MCF 10A (cell line): ENCODE measurements at regions of chr14 and their contacts with region 1.

Region 1: DNA sequence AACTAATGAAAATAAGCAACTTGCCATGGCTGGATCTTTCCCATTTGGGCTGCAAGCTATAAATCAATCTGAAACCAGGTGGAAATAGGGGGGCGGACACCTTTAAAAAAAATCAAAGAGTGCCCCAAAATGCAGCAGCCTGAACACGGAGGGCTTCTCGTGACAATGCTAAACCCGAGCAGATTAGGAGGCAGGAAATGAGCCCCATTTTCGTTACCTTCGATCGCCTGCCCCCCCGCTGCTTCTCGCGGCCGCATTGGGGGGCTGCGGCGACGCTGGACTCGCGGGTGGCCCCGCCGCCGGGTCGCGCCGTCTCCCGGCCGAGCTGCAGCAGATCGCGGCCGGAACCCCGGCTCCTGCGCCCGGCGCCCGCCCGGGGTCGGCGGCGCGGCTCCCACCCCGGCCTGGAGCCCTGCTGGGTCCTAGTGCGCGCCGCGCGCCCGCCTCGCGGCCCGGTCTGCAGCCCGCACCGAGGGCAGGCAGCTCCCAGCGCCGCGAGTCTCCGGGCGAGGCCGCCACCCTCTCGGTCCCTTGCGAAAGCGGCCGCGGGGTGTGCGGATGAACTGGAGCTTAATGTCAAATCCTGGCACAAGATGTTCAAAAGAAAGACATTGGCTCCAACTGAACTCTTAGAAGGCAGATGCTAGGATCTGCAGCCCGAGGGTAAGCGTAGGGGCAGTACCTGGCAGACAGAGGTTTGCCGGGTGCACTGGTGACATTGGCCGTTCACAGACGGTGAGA is 201.9 kb upstream of the FOXN3 start:
- DNase-seq: peak; percentile 57
- H3K4me3 Mint-ChIP-seq: peak overlapping the region; percentile 77
- H3K27ac Mint-ChIP-seq: peak overlapping the region; percentile 39
- H3K4me1 Mint-ChIP-seq: peaks cover 7% of the 10 kb centered on the region
- H3K27me3 Mint-ChIP-seq: no peaks in the 10 kb centered on the region
- CTCF ChIP-seq: no peak

Region 2: GRCh38 chr14:89504602-89505313 is 114.2 kb before region 1 on chr14:
- CTCF ChIA-PET with region 1: no interaction called
- POLR2A ChIA-PET with region 1: interaction called, 3 read pairs
- intact Hi-C with region 1: loop called (anchors 5 kb)
- DNase-seq: no peak
- H3K4me3 Mint-ChIP-seq: no peak overlapping the region
- H3K27ac Mint-ChIP-seq: peak overlapping the region; percentile 75
- H3K4me1 Mint-ChIP-seq: peaks cover 27% of the 10 kb centered on the region
- H3K27me3 Mint-ChIP-seq: no peaks in the 10 kb centered on the region
- CTCF ChIP-seq: no peak